Activated CD4-positive, alpha-beta memory T cell treated with anti-CD3 and anti-CD28 coated beads, Interleukin-2, amount 10 ng/mL, durations not matched to agents 7 days and 5 days (primary cell): ENCODE measurements at regions of chr4 and their contacts with region 1.

Region 1: DNA sequence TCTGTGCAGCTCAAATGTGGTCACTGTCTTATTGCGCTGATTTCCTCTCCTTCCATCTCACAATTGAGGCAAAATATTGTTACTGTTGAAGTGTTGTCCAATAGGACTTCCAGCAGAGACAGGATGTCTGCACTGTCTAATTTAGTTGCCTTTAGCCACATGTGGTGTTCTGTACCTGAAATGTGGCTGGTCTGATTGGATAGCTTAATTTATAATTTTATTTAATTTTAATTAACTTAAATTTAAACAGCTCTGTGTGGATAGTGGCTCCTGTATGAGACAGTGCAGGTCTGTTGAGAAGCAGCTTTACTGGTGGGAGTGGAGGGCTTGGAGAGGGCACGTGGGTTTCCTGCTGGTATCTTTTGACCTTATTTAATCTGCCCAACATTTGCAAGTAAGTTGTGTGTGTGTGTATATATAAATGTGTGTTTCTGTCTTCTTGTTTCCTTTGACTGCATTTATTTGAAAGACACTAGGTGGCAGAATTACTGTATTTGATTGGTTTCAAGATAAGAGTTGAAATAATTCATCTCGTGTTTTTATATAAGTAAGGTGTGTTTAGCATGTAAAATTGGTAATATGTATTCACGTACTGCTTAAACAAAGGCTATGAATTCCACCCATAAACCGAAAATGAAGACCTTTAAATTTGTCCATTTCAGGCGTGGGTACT is 55.3 kb upstream of the MSANTD1 start:
- DNase-seq: no peak
- H3K4me3 Mint-ChIP-seq: no peak overlapping the region
- H3K27ac Mint-ChIP-seq: peak overlapping the region; percentile 49
- H3K4me1 Mint-ChIP-seq: peaks cover 67% of the 10 kb centered on the region
- H3K27me3 Mint-ChIP-seq: no peaks in the 10 kb centered on the region

Region 2: DNA sequence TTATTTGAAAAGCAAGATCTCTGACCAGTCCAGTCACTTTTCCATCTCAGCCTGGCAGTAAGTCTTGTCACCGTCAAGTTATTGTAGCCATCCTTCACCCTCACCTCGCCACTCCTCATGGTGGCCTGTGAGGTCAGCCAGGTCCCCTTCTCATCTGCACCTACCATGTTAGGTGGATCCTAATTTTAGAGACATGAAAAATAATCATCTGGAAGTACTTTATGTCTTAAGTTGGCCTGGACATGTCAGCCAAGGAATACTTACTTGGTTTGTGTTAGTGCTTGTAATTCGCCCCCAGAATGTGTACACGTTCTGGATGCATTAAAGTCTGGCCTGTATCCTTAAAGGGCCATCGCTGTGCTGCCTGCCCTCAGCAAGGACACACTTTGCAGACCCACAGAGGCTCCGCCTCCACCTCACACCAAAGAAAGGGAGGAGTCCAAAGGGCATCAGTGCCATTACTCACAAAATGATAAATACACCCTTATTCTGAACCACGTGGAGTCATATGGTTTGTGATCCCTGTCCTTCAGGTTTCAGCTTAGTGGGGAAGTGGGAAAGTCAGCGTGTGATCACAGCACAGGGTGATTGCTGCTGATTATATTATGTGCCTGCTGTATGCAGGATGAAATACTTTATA is 19.2 kb after region 1 on chr4:
- CTCF ChIA-PET with region 1: interaction called, 22 read pairs
- POLR2A ChIA-PET with region 1: no interaction called
- DNase-seq: no peak
- H3K4me3 Mint-ChIP-seq: no peak overlapping the region
- H3K27ac Mint-ChIP-seq: no peak overlapping the region
- H3K4me1 Mint-ChIP-seq: no peaks in the 10 kb centered on the region
- H3K27me3 Mint-ChIP-seq: no peaks in the 10 kb centered on the region

Region 3: DNA sequence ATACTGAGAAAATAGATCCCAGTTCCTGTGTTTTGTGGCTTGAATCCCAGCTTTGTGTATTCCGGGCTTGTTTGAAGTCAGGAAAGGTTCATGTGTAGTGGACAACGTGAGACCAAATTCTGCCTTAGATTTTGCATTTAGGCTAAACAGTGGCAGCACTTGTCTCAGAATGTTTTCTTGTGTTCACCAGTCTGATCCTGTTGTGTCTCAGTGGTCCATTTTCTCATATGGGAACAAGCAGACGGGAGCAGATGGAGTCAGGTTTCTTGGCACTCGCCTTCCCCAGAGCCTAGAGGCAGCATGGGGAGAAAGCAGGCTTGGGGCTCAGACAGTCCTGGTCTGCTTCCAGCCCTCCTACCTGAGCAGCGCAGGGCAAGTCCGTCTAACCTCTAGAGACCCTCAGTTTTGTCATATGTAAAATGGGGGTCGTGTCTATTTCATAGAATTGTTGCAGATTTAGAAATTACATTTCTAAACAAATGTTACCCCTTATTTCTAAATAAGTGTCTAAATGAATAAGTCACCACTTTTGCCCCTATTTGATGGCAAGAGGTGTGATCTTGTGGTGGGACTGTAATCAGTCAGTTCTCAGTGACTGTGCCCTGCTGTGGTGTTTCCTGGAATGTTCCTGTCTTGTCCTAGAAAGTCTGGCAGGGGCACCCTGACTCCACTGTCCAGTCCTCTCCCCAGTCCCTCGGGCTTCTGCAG is 27.0 kb after region 1 on chr4:
- CTCF ChIA-PET with region 1: interaction called, 12 read pairs
- POLR2A ChIA-PET with region 1: interaction called, 4 read pairs
- DNase-seq: no peak
- H3K4me3 Mint-ChIP-seq: no peak overlapping the region
- H3K27ac Mint-ChIP-seq: no peak overlapping the region
- H3K4me1 Mint-ChIP-seq: peaks cover 25% of the 10 kb centered on the region
- H3K27me3 Mint-ChIP-seq: no peaks in the 10 kb centered on the region

Region 4: GRCh38 chr4:3241898-3242524 is 48.3 kb after region 1 on chr4:
- CTCF ChIA-PET with region 1: interaction called, 17 read pairs
- POLR2A ChIA-PET with region 1: interaction called, 5 read pairs
- DNase-seq: no peak
- H3K4me3 Mint-ChIP-seq: no peak overlapping the region
- H3K27ac Mint-ChIP-seq: no peak overlapping the region
- H3K4me1 Mint-ChIP-seq: peaks cover 18% of the 10 kb centered on the region
- H3K27me3 Mint-ChIP-seq: no peaks in the 10 kb centered on the region